Activated T-helper 2 cell treated with anti-CD3 and anti-CD28 coated beads, Interferon-gamma antibody, Interleukin-2, Interleukin-4, amounts not matched to agents 10 μg/mL and 5 μg/mL and 100 μg/mL, durations not matched to agents 14 hours and 24 hours and 36 hours (primary cell): ENCODE measurements at regions of chr13 and their contacts with region 1.

Region 1: GRCh38 chr13:32297206-32297605 is 18.0 kb downstream of the ZAR1L start:
- DNase-seq: no peak
- H3K4me3 Mint-ChIP-seq: no peak overlapping the region
- H3K27ac Mint-ChIP-seq: no peak overlapping the region
- H3K4me1 Mint-ChIP-seq: peaks cover 16% of the 10 kb centered on the region
- H3K27me3 Mint-ChIP-seq: peaks cover 14% of the 10 kb centered on the region

Region 2: DNA sequence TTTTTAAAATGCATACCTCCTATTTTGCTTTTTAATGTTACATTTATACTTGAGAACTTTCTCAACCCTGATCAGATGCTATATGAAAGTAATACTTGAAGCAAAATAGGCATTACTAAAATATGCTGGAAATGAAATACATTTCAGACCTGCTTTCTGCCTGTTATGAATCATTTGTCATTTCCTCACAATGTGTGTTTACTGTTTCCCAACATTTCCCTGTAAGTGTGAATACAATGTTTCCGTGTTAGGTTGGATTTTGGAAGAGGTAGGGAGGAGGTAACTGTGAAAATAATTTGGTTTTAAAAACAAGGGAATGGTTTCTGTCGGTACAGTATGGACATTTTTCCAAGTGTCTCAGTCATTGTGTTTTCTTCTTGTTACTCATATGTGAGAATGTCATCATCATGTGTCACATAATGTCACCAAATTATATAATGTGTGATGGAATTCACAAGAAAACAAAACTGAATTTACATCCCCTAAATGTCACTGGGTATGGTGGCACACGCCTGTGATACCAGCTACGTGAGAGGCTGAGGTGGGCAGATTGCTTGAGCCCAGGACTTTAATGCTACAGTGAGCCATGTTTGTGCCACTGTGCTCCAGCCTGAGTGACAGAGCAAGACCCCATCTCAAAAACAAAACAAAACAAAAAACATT is 25.1 kb before region 1 on chr13:
- intact Hi-C with region 1: loop called (anchors 2 kb)
- DNase-seq: no peak
- H3K4me3 Mint-ChIP-seq: no peak overlapping the region
- H3K27ac Mint-ChIP-seq: peak overlapping the region; percentile 62
- H3K4me1 Mint-ChIP-seq: peaks cover 5% of the 10 kb centered on the region
- H3K27me3 Mint-ChIP-seq: no peaks in the 10 kb centered on the region

Region 3: DNA sequence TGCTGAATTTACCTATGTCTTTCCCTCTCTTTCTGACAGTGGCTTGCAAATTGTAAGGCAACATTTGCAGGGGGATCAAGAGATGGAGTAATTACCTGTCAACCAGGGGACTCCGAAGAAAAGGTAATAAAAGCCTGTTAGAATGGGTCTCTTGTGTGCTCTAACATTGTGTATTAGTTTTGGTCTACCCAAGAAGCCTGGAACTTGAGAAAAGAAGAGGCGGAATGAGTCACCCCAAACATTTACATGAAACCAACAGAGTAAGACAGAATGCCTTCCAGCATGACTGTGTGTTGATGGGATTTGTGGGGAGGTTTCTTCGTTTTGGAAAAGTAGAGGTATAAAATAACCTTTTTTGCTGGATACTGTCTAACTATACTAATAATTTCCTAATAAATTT is 18.8 kb before region 1 on chr13:
- intact Hi-C with region 1: loop called (anchors 2 kb)
- DNase-seq: no peak
- H3K4me3 Mint-ChIP-seq: no peak overlapping the region
- H3K27ac Mint-ChIP-seq: no peak overlapping the region
- H3K4me1 Mint-ChIP-seq: peaks cover 10% of the 10 kb centered on the region
- H3K27me3 Mint-ChIP-seq: peaks cover 2% of the 10 kb centered on the region